CD8-positive, alpha-beta T cell (primary cell): ENCODE measurements at regions of chr1 and their contacts with region 1.

Region 1: GRCh38 chr1:64584479-64584878 is 114.5 kb downstream of the CACHD1 start:
- DNase-seq: no peak
- ATAC-seq: no peak
- H3K4me3 ChIP-seq: no peak overlapping the region
- H3K4me3 Mint-ChIP-seq: no peak overlapping the region
- H3K27ac ChIP-seq: no peak overlapping the region
- H3K27ac Mint-ChIP-seq: no peak overlapping the region
- H3K4me1 ChIP-seq: peaks cover 6% of the 10 kb centered on the region
- H3K4me1 Mint-ChIP-seq: peaks cover 10% of the 10 kb centered on the region
- H3K27me3 ChIP-seq: no peaks in the 10 kb centered on the region
- H3K27me3 Mint-ChIP-seq: no peaks in the 10 kb centered on the region
- CTCF ChIP-seq: peak; percentile 15

Region 2: GRCh38 chr1:64268653-64269557 is 315.6 kb before region 1 on chr1:
- CTCF ChIA-PET with region 1: no interaction called
- POLR2A ChIA-PET with region 1: no interaction called
- intact Hi-C with region 1: loop called in 1 of 2 experiments (anchors 2 kb)
- DNase-seq: peak; percentile 5 to 77 (median 60)
- ATAC-seq: peak; percentile 52
- H3K4me3 ChIP-seq: no peak overlapping the region
- H3K4me3 Mint-ChIP-seq: no peak overlapping the region
- H3K27ac ChIP-seq: no peak overlapping the region
- H3K27ac Mint-ChIP-seq: no peak overlapping the region
- H3K4me1 ChIP-seq: no peaks in the 10 kb centered on the region
- H3K4me1 Mint-ChIP-seq: no peaks in the 10 kb centered on the region
- H3K27me3 ChIP-seq: peaks cover 0 to 4% of the 10 kb centered on the region in 2 experiments
- H3K27me3 Mint-ChIP-seq: peaks cover 13% of the 10 kb centered on the region
- CTCF ChIP-seq: peak; percentile 68